Tibial artery (tissue), 4 donors: ENCODE measurements at regions of chr9 and their contacts with region 1.

Region 1: DNA sequence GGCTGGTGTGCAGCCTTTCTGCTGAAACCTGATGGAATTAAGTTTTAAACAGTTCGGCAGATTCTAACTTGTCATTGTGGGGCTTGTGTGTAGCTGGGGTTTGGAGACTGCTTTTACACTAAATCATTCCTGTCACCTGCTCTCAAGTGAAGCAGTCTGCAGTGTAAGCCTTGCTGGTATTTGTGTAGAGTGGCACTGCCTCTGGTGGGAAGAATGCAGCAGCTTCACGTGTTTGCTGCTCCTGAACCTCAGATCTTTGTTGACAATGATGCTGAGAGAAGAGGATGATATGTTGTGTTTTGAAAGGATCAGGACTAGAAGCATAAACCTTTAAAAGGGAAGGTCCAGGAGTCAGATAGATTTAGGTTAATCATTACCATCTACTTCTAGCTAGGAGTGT is 88.1 kb downstream of the KDM4C start:
- DNase-seq: no peak
- H3K4me3 ChIP-seq: no peak overlapping the region
- H3K27ac ChIP-seq: no peak overlapping the region
- H3K4me1 ChIP-seq: no peaks in the 10 kb centered on the region
- H3K27me3 ChIP-seq: no peaks in the 10 kb centered on the region
- CTCF ChIP-seq: no peak

Region 2: GRCh38 chr9:6703898-6704639 is 141.8 kb before region 1 on chr9:
- intact Hi-C with region 1: no loop called
- DNase-seq: peak; percentile 48 to 85
- H3K4me3 ChIP-seq: peak overlapping the region; percentile 54 to 60
- H3K27ac ChIP-seq: peak overlapping the region; percentile 36 to 74
- H3K4me1 ChIP-seq: peaks cover 0 to 3% (median 1%) of the 10 kb centered on the region in 4 donors
- H3K27me3 ChIP-seq: no peaks in the 10 kb centered on the region
- CTCF ChIP-seq: no peak

Region 3: GRCh38 chr9:6884101-6884500 is 38.2 kb after region 1 on chr9:
- intact Hi-C with region 1: loop called (anchors 2 kb)
- DNase-seq: no peak
- H3K4me3 ChIP-seq: no peak overlapping the region
- H3K27ac ChIP-seq: no peak overlapping the region
- H3K4me1 ChIP-seq: no peaks in the 10 kb centered on the region
- H3K27me3 ChIP-seq: no peaks in the 10 kb centered on the region
- CTCF ChIP-seq: no peak